Sigmoid colon (tissue), 7 donors: ENCODE measurements at regions of chr4 and their contacts with region 1.

Region 1: DNA sequence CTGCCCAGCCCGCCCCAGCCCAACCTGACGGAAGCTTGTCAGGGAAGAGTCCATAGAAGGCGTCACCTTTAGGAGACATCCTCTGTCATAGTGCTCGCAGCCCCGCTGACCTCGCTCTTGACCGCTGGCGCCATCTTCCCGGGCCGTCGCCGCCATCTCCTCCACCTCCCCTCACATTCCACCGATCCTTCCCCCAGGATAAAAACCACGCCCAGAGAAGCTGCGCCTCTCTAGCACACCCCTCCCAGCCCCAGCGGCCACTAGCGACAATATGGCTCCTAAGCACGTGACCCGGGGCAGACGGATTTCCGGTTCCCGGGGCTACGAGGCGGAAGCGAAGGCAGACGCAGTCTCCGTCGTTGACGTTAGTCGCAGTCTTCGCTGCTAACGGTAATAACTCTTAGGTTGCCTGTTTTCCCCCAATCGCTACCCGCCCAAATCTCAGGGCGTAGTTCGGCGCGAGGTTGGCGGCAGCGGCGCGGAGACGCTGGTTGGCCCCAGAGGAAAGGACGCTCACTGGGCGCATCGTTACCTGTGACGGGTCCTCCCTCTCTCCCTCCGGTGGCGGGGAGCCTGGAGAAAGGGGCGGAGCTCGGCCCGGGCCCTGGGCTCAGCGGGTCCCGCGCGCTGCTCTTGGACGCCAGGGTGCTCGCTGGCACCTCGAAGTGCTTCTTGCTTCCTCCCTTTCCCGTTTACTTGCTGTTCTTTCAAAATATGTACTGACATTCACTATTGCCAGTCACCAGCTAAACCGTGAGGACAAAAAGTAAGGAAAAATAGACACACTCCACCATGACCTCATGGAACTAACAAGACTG is at the starts of genes RCHY1 and THAP6:
- DNase-seq: peak; percentile 98
- H3K4me3 ChIP-seq: peak within 1 kb of the TSS; percentile 63 to 72 (median 66)
- H3K27ac ChIP-seq: peak within 1 kb of the TSS; percentile 95 to 97 (median 96)
- H3K4me1 ChIP-seq: peaks cover 0 to 51% (median 39%) of the 10 kb centered on the region in 4 donors
- H3K27me3 ChIP-seq: no peaks in the 10 kb centered on the region
- CTCF ChIP-seq: no peak
- EP300 ChIP-seq: peak in 1 of 4 donors; percentile 54
- POLR2A ChIP-seq: peak in 1 of 2 donors; percentile 64
- total RNA-seq, gene RCHY1: 19.4 to 41.5 (median 24.5) TPM
- total RNA-seq, gene THAP6: 17.1 to 38.8 (median 20.0) TPM

Region 2: GRCh38 chr4:74157561-74158465 is 1356.5 kb before region 1 on chr4 and contains the start of gene MTHFD2L:
- intact Hi-C with region 1: loop called (anchors 5 kb)
- DNase-seq: peak; percentile 96
- H3K4me3 ChIP-seq: peak within 1 kb of the TSS; percentile 54 to 74 (median 66)
- H3K27ac ChIP-seq: peak within 1 kb of the TSS; percentile 85 to 94 (median 91)
- H3K4me1 ChIP-seq: peaks cover 0 to 36% (median 29%) of the 10 kb centered on the region in 4 donors
- H3K27me3 ChIP-seq: no peaks in the 10 kb centered on the region
- CTCF ChIP-seq: no peak
- EP300 ChIP-seq: no peak
- POLR2A ChIP-seq: peak; percentile 46 to 48
- total RNA-seq, gene MTHFD2L: 13.8 to 27.1 (median 22.9) TPM

Region 3: DNA sequence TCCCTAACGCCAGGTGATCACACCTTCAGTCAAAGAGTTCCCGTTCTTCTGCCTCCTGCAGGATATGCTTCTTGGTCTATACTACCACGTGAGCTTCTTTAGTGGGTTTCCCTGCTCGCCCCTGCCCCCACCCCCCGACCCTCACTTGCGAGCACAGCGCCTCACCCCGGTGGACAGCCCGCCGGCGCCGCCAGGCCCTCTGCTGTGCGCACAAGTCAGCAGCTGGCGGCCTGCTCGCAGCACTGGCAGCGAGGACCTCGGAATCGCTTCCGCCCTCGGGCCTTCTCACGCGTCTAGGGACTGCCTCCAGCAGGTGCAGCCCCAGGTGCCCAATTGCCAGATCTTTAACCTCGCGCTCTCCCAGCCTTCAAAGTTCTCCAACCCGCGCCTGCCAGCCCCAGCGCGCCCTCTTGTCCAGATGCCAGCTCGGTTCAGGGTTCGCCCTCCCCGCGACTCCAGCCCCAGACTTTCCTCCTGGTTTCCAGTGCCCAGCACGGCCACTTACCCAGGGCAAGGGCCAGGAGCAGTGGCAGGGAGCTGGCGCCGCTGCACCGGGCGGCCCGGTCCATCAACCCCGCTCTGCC is 720.5 kb before region 1 on chr4:
- intact Hi-C with region 1: loop called (anchors 10 kb)
- DNase-seq: peak; percentile 81
- H3K4me3 ChIP-seq: peak overlapping the region; percentile 65 to 74 (median 68)
- H3K27ac ChIP-seq: peak overlapping the region; percentile 89 to 95 (median 92)
- H3K4me1 ChIP-seq: peaks cover 0 to 33% (median 26%) of the 10 kb centered on the region in 4 donors
- H3K27me3 ChIP-seq: no peaks in the 10 kb centered on the region
- CTCF ChIP-seq: peak; percentile 9 to 55 (median 42)
- EP300 ChIP-seq: no peak
- POLR2A ChIP-seq: no peak

Region 4: DNA sequence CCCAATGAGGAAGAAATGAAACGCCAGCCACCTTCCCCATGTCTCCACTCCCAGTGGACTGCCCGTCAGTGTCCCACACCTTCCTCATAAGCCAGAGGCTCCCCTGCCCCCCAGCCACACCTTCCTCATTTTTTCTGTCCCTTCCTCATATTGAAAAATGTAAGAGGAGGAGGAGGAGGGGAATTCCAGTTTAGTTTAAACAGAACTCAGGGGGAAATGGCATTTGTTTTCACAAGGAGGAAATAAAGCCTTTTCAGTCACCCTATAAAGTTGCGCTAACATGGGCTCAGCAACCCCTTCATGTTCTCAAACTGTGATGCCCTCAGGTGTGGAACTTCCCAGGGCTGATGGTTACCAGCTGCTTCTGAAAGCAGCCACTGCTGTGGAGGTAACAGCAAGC is 483.6 kb before region 1 on chr4:
- intact Hi-C with region 1: no loop called
- DNase-seq: no peak
- H3K4me3 ChIP-seq: no peak overlapping the region
- H3K27ac ChIP-seq: no peak overlapping the region
- H3K4me1 ChIP-seq: peaks cover 0 to 10% (median 6%) of the 10 kb centered on the region in 4 donors
- H3K27me3 ChIP-seq: no peaks in the 10 kb centered on the region
- CTCF ChIP-seq: no peak
- EP300 ChIP-seq: no peak
- POLR2A ChIP-seq: no peak

Region 5: DNA sequence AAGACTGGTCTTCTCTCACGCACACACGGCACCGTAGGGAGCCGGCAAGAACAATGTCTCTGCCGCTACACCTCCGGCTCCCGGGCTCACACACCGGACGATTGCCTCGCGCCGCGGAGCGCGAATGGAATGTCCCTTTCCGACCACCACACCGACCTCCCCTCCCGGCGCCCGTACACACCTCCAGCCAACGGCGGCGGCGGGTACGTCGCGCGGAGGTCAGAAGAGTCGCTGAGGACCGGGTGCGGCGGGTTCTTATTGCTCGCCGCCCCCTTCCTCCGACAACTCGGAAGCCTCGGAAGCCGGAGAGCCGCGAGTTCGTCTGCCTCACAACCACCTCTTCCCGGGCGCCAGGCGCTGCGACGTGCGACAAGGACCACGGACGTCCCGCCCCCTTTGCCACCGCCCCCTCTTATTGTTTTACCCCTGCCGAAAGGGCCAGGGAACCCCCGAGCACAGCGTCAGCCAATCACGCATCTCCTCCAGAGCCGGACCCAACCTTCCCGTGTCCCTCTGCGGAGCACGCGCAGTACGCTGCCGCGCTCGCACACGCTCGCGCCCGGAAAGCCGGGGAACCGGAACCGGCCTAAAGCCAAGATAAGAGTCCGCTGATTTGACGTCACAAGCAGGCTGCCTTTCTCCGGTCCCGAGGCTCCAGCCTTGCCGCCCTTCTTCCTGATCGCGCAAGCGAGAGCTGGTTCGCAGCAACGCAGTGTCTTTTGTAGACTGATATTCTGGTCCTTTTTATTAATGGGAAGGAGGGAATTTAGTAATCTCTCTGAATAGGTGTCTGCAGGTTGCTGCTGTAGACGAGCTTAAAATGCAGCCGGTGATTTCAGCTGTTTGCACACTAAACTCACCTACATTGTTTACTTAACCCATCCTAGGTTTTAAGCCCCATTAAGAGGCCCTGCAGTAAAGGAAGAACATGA is 159.0 kb after region 1 on chr4 and contains the start of gene G3BP2:
- intact Hi-C with region 1: loop called (anchors 5 kb)
- DNase-seq: peak; percentile 99
- H3K4me3 ChIP-seq: peak within 1 kb of the TSS; percentile 85 to 98 (median 92)
- H3K27ac ChIP-seq: peak within 1 kb of the TSS; percentile 97 to 99 (median 98)
- H3K4me1 ChIP-seq: peaks cover 0 to 41% (median 35%) of the 10 kb centered on the region in 4 donors
- H3K27me3 ChIP-seq: no peaks in the 10 kb centered on the region
- CTCF ChIP-seq: no peak
- EP300 ChIP-seq: peak in 2 of 4 donors; percentile 40 to 41
- POLR2A ChIP-seq: peak; percentile 85 to 90
- total RNA-seq, gene G3BP2: 102 to 141 (median 119) TPM

Region 6: DNA sequence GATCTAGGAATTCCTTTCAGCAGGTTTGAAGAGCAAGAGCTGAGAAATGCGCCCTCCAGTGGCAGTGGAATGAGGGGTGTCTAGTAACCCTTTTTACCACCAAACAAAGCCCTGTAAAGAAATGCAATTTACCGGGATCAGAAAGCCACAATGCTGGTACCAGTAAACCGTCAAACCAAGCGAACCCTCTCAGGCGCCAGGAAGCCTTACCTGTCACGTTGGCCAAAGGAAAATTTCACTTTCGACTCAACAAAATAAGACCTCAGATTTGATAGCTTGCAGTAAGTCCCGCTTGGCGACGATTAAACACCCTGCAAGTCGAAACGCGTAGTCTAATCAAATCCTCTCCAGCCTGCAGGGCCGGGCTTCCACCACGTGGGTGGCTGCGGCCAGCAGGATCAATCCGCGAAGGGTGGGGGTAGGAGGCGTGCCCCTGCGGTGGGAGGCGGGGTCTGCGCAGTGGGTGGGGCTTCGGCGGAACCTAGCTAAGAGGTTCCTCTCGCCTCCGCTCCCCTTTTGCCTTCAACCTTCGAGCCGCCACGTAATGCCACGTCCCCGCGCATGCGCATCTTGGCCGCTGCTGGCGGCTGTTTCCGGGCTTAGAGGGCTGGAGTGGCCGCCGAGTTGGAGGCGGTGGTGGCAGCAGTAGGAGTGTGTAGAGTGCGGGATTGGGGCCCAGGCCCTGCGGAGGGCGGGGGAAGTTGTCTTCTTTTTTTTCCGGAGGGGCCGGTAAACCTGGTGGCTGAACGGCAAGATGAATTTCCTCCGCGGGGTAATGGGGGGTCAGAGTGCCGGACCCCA is 209.9 kb after region 1 on chr4 and contains the start of gene USO1:
- intact Hi-C with region 1: loop called (anchors 5 kb)
- DNase-seq: peak; percentile 99
- H3K4me3 ChIP-seq: peak within 1 kb of the TSS; percentile 74 to 94 (median 87)
- H3K27ac ChIP-seq: peak within 1 kb of the TSS; percentile 96 to 99 (median 98)
- H3K4me1 ChIP-seq: peaks cover 0 to 56% (median 45%) of the 10 kb centered on the region in 4 donors
- H3K27me3 ChIP-seq: no peaks in the 10 kb centered on the region
- CTCF ChIP-seq: peak; percentile 61 to 80 (median 66)
- EP300 ChIP-seq: no peak
- POLR2A ChIP-seq: peak; percentile 95 to 98
- total RNA-seq, gene USO1: 66.5 to 99.4 (median 77.6) TPM

Region 7: DNA sequence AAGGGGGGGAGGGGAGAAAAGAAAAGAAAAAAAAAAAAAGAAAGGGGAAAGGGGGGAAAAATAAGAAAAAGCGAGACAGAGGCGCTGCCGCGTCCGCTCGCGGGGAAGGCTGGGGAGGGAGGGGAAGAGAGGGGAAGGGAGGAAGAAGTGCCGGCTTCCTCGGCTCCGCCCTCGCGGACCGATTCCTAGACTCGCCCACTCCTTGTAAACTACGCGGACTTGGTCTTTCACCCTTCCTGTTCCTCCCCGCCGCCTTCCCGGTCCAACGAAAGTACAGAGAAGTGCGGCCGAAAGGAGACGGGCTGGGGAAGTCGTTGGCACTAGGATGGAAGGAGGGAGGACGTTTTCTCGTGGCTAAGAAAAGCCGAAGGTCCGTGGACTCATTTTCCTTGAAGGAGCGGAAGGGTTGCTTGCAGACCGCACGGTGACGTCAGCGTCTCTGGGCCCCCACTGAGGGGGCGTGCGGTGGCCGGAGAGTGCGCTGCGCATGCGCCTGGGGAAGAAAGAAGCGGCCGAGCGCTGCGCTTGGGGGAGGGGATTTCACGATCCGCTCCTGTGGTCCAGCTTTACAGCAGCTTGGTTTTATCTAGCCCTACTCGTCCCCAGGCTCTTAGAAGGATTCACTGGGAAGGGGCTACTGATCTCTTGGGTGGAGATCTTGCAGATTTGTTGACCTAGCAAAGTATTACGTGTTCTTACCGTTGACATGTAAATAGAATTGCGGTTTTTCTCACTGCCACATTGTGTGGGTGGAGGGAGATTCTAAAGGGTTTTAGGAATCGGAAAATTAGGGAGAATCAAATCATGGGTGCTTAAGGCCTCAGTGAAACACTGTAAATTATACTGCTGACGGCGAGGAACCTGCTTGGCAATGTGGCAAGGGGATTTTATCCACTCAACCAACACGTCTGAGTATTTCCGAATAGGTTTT is 1561.8 kb after region 1 on chr4 and contains the start of gene CCNI:
- intact Hi-C with region 1: loop called (anchors 10 kb)
- DNase-seq: peak; percentile 99
- H3K4me3 ChIP-seq: peak within 1 kb of the TSS; percentile 89 to 99 (median 94)
- H3K27ac ChIP-seq: peak within 1 kb of the TSS; percentile 98 to 100 (median 100)
- H3K4me1 ChIP-seq: peaks cover 0 to 42% (median 32%) of the 10 kb centered on the region in 4 donors
- H3K27me3 ChIP-seq: no peaks in the 10 kb centered on the region
- CTCF ChIP-seq: no peak
- EP300 ChIP-seq: peak in 3 of 4 donors; percentile 13 to 63 (median 30)
- POLR2A ChIP-seq: peak; percentile 56 to 74
- total RNA-seq, gene CCNI: 248 to 339 (median 288) TPM